Vagina (tissue), 2 donors: ENCODE measurements at regions of chr17 and their contacts with region 1.

Region 1: DNA sequence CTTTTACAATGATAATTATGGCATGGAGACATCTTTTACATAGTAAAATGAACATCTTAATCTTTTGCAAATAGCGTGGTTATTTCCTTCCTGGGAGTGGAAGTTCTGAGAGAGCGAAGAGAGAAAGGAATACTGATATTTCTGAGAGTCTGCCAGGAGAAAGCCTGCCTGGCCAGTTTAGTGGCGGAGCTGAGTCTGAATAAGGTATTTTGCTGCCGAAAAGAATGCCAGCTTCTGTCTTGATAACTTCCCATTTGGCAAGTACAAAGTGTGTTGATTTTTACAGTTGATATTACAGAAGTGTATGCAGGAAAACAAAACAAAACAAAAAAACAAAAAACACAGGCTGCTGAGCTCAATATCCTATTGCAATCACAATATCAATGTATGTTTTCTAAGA is 55.9 kb downstream of the KCNJ2 start:
- DNase-seq: no peak
- H3K4me3 ChIP-seq: no peak overlapping the region
- H3K27ac ChIP-seq: no peak overlapping the region
- H3K4me1 ChIP-seq: no peaks in the 10 kb centered on the region
- H3K27me3 ChIP-seq: no peaks in the 10 kb centered on the region
- CTCF ChIP-seq: no peak
- POLR2A ChIP-seq: no peak

Region 2: GRCh38 chr17:68435876-68436842 is 1789.1 kb before region 1 on chr17:
- intact Hi-C with region 1: loop called (anchors 5 kb)
- DNase-seq: peak in 1 of 2 donors; percentile 84
- H3K4me3 ChIP-seq: no peak overlapping the region
- H3K27ac ChIP-seq: peak overlapping the region; percentile 36
- H3K4me1 ChIP-seq: peaks cover 16% of the 10 kb centered on the region
- H3K27me3 ChIP-seq: no peaks in the 10 kb centered on the region
- CTCF ChIP-seq: peak; percentile 87 to 94 (median 89)
- POLR2A ChIP-seq: no peak

Region 3: GRCh38 chr17:70434536-70435490 is 209.5 kb after region 1 on chr17:
- intact Hi-C with region 1: loop called (anchors 5 kb)
- DNase-seq: no peak
- H3K4me3 ChIP-seq: no peak overlapping the region
- H3K27ac ChIP-seq: no peak overlapping the region
- H3K4me1 ChIP-seq: no peaks in the 10 kb centered on the region
- H3K27me3 ChIP-seq: no peaks in the 10 kb centered on the region
- CTCF ChIP-seq: no peak
- POLR2A ChIP-seq: no peak